ENCODE measurements at regions of chr13 and their contacts with region 1.

Region 1: DNA sequence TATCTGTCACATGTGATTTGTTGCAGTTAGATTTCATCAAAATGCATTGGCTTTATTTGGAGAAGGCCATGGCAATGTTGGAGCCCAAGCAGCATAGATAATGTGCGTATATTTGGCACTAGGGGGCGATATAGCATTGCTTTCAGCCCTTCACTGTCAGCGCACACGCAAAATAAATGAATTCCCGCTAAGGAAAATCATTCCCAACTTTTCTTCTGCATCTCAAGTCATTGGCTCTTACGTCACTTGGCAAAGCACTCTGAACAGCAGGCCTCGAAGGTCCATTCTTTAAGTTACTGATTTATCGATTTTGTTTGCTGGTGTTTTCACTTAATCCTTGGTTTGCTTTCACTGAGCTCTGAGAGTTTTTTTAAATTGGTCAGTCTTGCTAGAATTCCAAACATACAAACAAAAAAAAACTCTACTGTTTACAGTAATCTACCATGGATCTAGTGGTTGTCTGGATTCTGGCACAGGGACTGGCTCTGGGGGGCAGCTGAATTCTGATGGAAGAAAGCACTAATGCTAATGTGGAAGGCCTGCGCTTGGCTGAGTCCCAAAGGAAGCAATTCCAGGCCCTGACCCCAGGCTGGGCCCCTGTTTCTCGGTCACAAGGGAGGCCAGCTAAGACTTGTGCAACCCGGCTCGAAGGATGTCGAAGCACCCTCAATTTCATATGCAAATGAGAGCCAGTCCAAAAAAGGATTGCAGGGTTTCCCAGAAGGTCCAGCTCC is 97.7 kb upstream of the IPO5 start:
- DNase-seq: peak in 3 of 10 donors; percentile 31 to 55 (median 32)

Region 2: GRCh38 chr13:98429977-98430736 is 574.4 kb after region 1 on chr13:
- intact Hi-C with region 1: loop called (anchors 10 kb)
- DNase-seq: peak in 2 of 10 donors; percentile 22